ENCODE measurements at regions of chr5 and their contacts with region 1.

Region 1: GRCh38 chr5:173615884-173616576 is 420 bp downstream of the BOD1 start:
- DNase-seq: peak; percentile 58
- ATAC-seq: peak; percentile 61
- H3K4me3 ChIP-seq: peak overlapping the region; percentile 72 to 88
- H3K27ac ChIP-seq: peak overlapping the region; percentile 81
- H3K4me1 ChIP-seq: peaks cover 9 to 18% of the 10 kb centered on the region in 2 experiments; a peak in 3 of 4 replicates
- H3K27me3 ChIP-seq: no peaks in the 10 kb centered on the region
- CTCF ChIP-seq: peak; percentile 42 to 66 (median 62); a peak in 4 of 6 replicates
- POLR2A ChIP-seq: no peak
- RAD21 ChIP-seq: peak; percentile 30

Region 2: GRCh38 chr5:173293817-173294672 is 322.0 kb before region 1 on chr5:
- CTCF ChIA-PET with region 1: interaction called, 18 read pairs
- POLR2A ChIA-PET with region 1: no interaction called
- RAD21 ChIA-PET with region 1: no interaction called
- intact Hi-C with region 1: no loop called
- DNase-seq: peak; percentile 56
- ATAC-seq: peak; percentile 93
- H3K4me3 ChIP-seq: peak overlapping the region; percentile 10 to 27; a peak in 3 of 4 replicates
- H3K27ac ChIP-seq: no peak overlapping the region
- H3K4me1 ChIP-seq: peaks cover 7 to 20% of the 10 kb centered on the region in 2 experiments; a peak in 3 of 4 replicates
- H3K27me3 ChIP-seq: no peaks in the 10 kb centered on the region
- CTCF ChIP-seq: peak; percentile 77 to 97 (median 89)
- POLR2A ChIP-seq: no peak
- RAD21 ChIP-seq: peak; percentile 99

Region 3: GRCh38 chr5:173925448-173926071 is 309.5 kb after region 1 on chr5:
- CTCF ChIA-PET with region 1: interaction called, 4 read pairs
- POLR2A ChIA-PET with region 1: interaction called, 3 read pairs
- RAD21 ChIA-PET with region 1: interaction called in 1 of 2 experiments, 3 read pairs
- intact Hi-C with region 1: loop called (anchors 1 kb)
- DNase-seq: peak; percentile 38
- ATAC-seq: peak; percentile 67
- H3K4me3 ChIP-seq: no peak overlapping the region
- H3K27ac ChIP-seq: no peak overlapping the region
- H3K4me1 ChIP-seq: no peaks in the 10 kb centered on the region
- H3K27me3 ChIP-seq: no peaks in the 10 kb centered on the region
- CTCF ChIP-seq: peak; percentile 44 to 72 (median 72); a peak in 5 of 6 replicates
- POLR2A ChIP-seq: no peak
- RAD21 ChIP-seq: peak; percentile 69

Region 4: GRCh38 chr5:173984218-173984617 is 368.2 kb after region 1 on chr5:
- CTCF ChIA-PET with region 1: interaction called, 16 read pairs
- POLR2A ChIA-PET with region 1: no interaction called
- RAD21 ChIA-PET with region 1: no interaction called
- intact Hi-C with region 1: loop called (anchors 1 kb)
- DNase-seq: peak; percentile 34
- ATAC-seq: peak; percentile 83
- H3K4me3 ChIP-seq: no peak overlapping the region
- H3K27ac ChIP-seq: no peak overlapping the region
- H3K4me1 ChIP-seq: no peaks in the 10 kb centered on the region
- H3K27me3 ChIP-seq: peaks cover 7% of the 10 kb centered on the region; the same call in 1 of the 2 replicates
- CTCF ChIP-seq: peak; percentile 42 to 65 (median 58); a peak in 5 of 6 replicates
- POLR2A ChIP-seq: no peak
- RAD21 ChIP-seq: peak; percentile 81

Region 5: DNA sequence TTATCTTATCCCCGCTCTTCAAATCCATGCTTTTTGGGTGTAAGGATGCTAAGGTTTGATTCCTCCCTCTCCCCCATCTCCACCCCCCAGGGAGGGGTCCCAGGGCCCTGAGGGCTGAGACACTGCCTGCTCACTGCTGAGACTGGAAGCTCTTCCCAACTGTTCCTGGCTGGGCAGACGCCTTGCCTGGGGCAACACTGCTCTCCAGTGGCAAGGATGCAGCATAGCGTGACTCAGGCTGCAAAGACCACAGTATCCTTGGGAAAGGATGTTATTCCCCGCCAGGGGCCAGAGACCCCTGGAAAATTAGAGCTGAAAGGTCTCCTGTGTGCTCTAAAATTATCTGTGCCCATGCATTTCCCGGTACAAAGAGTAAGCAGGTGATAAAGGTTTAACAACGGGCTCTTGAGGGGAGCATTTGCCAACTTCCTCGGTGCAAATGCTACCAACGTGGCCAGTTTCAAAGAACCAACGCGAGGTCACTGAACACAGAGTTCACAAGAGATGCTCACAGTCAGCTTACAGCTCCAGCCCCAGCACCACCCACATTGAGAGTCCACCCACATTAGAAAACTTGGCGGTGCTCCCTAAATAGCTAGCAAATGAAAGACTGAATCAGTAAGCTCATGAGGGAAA is 701.3 kb after region 1 on chr5:
- CTCF ChIA-PET with region 1: interaction called, 6 read pairs
- POLR2A ChIA-PET with region 1: no interaction called
- RAD21 ChIA-PET with region 1: no interaction called
- intact Hi-C with region 1: loop called (anchors 1 kb)
- DNase-seq: no peak
- ATAC-seq: peak; percentile 97
- H3K4me3 ChIP-seq: no peak overlapping the region
- H3K27ac ChIP-seq: no peak overlapping the region
- H3K4me1 ChIP-seq: no peaks in the 10 kb centered on the region
- H3K27me3 ChIP-seq: peaks cover 30% of the 10 kb centered on the region
- CTCF ChIP-seq: peak; percentile 79 to 94 (median 91)
- POLR2A ChIP-seq: no peak
- RAD21 ChIP-seq: peak; percentile 95